Motor neuron (in vitro differentiated cells): ENCODE measurements at regions of chr3 and their contacts with region 1.

Region 1: DNA sequence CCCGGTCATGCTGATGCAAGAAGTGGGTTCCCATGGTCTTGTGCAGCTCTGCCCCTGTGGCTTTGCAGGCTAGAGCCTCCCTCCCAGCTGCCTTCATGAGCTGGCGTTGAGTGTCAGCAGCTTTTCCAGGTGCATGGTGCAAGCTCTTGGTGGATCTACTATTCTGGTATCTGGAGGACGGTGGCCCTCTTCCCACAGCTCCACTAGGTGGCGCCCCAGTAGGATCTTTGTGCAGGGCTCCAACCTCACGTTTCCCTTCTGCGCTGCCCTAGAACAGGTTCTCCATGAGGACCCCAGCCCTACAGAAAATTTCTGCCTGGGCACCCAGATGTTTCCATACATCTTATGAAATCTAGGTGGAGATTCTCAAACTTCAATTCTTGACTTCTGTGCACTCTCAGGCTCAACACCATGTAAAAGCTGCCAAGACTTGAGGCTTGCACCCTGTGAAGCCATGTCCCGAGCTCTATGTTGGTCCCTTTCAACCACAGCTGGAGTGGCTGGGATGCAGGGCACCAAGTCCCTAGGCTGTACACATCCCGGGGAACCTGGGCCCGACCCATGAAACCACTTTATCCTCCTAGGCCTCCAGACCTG is 238.4 kb upstream of the MDFIC2 start:
- ATAC-seq: peak in 4 of 8 experiments; percentile 33 to 95 (median 94)
- H3K4me3 ChIP-seq: no peak overlapping the region
- H3K27ac ChIP-seq: no peak overlapping the region
- H3K4me1 ChIP-seq: peaks cover 0 to 7% of the 10 kb centered on the region in 2 donors

Region 2: GRCh38 chr3:70185661-70186060 is 365.2 kb before region 1 on chr3:
- in situ Hi-C with region 1: no loop called
- ATAC-seq: no peak
- H3K4me3 ChIP-seq: no peak overlapping the region
- H3K27ac ChIP-seq: no peak overlapping the region
- H3K4me1 ChIP-seq: peaks cover 0 to 18% of the 10 kb centered on the region in 2 donors

Region 3: GRCh38 chr3:70400194-70400593 is 150.6 kb before region 1 on chr3:
- in situ Hi-C with region 1: no loop called
- ATAC-seq: no peak
- H3K4me3 ChIP-seq: no peak overlapping the region
- H3K27ac ChIP-seq: no peak overlapping the region
- H3K4me1 ChIP-seq: no peaks in the 10 kb centered on the region

Region 4: GRCh38 chr3:70789898-70790297 is 239.1 kb after region 1 on chr3:
- in situ Hi-C with region 1: no loop called
- ATAC-seq: no peak
- H3K4me3 ChIP-seq: no peak overlapping the region
- H3K27ac ChIP-seq: no peak overlapping the region
- H3K4me1 ChIP-seq: no peaks in the 10 kb centered on the region

Region 5: GRCh38 chr3:70982700-70983140 is 431.9 kb after region 1 on chr3:
- in situ Hi-C with region 1: loop called in 1 of 9 experiments (anchors 25 kb)
- ATAC-seq: peak in 7 of 8 experiments; percentile 57 to 92 (median 91)
- H3K4me3 ChIP-seq: no peak overlapping the region
- H3K27ac ChIP-seq: peak overlapping the region; percentile 51 to 79
- H3K4me1 ChIP-seq: peaks cover 39 to 65% of the 10 kb centered on the region in 2 donors